ENCODE measurements at regions of chr19 and their contacts with region 1.

Region 1: GRCh38 chr19:39532233-39533002 is at the start of gene EID2B:
- DNase-seq: peak; percentile 96 to 98 (median 97)
- ATAC-seq: peak; percentile 97
- H3K4me3 ChIP-seq: peak within 1 kb of the TSS; percentile 72
- H3K27ac ChIP-seq: peak within 1 kb of the TSS; percentile 59
- H3K4me1 ChIP-seq: peaks cover 3 to 6% of the 10 kb centered on the region in 2 experiments; a peak in 2 of 5 replicates
- H3K27me3 ChIP-seq: no peaks in the 10 kb centered on the region
- CTCF ChIP-seq: peak; percentile 96 to 99 (median 99)
- EP300 ChIP-seq: peak; percentile 24; the same call in 1 of the 2 replicates
- POLR2A ChIP-seq: peak; percentile 68
- RAD21 ChIP-seq: peak; percentile 98
- polyA plus RNA-seq, gene EID2B: 4.9 to 5.4 TPM

Region 2: DNA sequence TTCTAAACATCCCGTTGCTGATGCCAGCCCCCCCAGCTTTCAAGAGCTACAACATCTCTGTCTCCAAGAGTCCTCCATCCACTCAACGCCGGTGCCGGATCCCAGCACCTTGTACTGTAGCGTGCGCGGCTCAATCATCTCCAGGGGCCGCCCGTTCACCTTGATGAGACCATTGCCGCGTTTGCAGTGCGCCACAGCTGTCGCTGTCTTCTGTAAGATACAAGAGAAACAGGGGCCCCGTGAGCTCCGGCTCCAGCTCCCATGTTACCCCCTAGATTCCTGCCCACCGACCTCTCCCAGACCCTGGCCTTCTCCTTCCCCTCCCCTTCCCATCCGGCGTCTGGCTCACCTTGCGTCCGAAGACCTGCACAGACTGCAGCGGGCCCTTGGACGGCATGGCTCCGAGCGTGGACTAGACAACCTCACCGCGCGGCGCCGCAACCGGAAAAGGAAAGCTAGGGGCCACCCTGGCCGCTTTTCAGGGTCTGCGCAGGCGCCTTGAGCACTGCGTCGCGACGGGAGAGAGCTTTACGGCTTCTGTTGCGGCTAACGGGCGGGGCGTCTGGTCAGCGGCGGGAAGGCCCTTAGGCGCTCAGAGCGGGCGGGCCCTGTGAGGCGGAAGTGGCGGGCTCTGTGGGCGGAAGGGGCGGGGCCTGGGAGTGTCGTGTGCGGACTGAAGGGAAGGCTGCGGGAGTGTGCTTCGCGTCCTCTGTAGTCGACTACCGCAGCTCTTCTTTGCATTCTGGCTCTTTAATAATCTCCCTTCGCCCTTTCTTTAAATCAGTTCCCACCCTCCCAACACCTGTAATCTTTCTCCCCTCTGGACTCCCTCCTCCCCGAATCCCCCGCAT is 96.7 kb before region 1 on chr19 and contains the start of gene RPS16:
- CTCF ChIA-PET with region 1: interaction called, 4 read pairs
- POLR2A ChIA-PET with region 1: interaction called, 13 read pairs
- in situ Hi-C with region 1: loop called (anchors 5 kb)
- intact Hi-C with region 1: loop called (anchors 1 kb)
- DNase-seq: peak; percentile 95 to 99 (median 95)
- ATAC-seq: peak; percentile 88
- H3K4me3 ChIP-seq: peak within 1 kb of the TSS; percentile 100
- H3K27ac ChIP-seq: peak within 1 kb of the TSS; percentile 95
- H3K4me1 ChIP-seq: peaks cover 25 to 29% of the 10 kb centered on the region in 2 experiments
- H3K27me3 ChIP-seq: no peaks in the 10 kb centered on the region
- CTCF ChIP-seq: no peak
- EP300 ChIP-seq: no peak
- POLR2A ChIP-seq: peak; percentile 99
- RAD21 ChIP-seq: no peak
- polyA plus RNA-seq, gene RPS16: 2,545 to 3,175 TPM

Region 3: DNA sequence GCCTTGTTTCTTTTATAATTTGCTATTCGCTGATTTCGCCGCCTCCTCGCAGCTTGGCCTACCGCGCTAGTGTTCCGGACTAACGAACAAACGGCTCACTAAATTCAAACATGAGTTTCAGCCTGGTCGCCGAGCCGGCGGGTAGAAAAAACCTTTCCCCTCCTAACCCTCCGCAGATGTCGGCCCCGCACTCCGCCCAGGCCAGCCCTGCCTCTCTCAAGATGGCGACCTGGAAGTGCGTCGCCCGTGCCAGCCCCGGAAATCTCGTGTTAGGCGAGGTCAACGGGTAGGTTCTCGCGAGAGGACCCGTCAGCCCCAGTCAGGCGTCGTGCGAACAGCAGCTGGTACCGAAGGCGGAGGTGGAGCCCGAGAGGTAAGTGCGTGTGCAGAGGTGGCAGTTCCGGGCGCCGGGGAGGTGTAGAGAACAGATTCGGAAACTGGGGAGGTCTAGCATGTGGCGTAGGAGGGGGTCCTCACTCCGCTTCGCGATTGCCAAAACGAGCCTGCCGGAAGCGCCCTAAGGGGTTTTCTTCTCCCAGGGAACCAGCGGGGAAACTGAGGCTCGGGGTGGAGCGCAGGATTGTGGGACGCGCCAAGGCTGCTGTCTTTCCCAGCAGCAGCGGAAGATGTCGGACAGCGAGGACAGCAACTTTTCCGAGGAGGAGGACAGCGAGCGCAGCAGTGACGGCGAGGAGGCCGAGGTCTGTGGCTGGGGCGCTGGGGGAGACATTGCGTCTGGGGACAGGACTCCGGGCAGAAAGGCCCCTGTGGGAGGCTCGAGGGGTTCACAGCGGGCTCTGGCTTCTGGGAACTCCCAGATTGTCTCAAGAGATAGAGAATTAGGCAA is 86.9 kb before region 1 on chr19 and contains the start of gene SUPT5H:
- CTCF ChIA-PET with region 1: interaction called, 4 read pairs
- POLR2A ChIA-PET with region 1: interaction called, 3 read pairs
- in situ Hi-C with region 1: loop called (anchors 5 kb)
- intact Hi-C with region 1: loop called (anchors 1 kb)
- DNase-seq: peak; percentile 95 to 99 (median 96)
- ATAC-seq: peak; percentile 99
- H3K4me3 ChIP-seq: peak within 1 kb of the TSS; percentile 71
- H3K27ac ChIP-seq: peak within 1 kb of the TSS; percentile 72
- H3K4me1 ChIP-seq: peaks cover 2 to 22% of the 10 kb centered on the region in 2 experiments; a peak in 3 of 5 replicates
- H3K27me3 ChIP-seq: no peaks in the 10 kb centered on the region
- CTCF ChIP-seq: peak in 1 of 3 experiments; percentile 28; a peak in 1 of 6 replicates
- EP300 ChIP-seq: peak; percentile 41; the same call in 1 of the 2 replicates
- POLR2A ChIP-seq: peak; percentile 88
- RAD21 ChIP-seq: no peak
- polyA plus RNA-seq, gene SUPT5H: 13.3 to 18.8 TPM

Region 4: DNA sequence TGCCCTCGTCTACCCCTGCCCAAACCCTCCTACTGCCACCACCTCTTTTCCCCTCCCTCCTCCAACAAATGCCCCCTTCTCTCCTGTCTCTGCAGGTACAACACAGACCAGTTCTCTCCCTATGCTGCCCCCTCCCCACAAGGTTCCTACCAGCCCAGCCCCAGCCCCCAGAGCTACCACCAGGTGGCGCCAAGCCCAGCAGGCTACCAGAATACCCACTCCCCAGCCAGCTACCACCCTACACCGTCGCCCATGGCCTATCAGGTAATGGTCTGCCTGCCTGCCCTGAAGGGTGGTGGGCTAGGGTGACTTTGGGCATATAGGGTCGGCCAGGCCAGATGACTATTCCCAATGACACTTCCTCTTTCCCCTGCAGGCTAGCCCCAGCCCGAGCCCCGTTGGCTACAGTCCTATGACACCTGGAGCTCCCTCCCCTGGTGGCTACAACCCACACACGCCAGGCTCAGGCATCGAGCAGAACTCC is 58.2 kb before region 1 on chr19:
- CTCF ChIA-PET with region 1: interaction called, 12 read pairs
- POLR2A ChIA-PET with region 1: interaction called, 3 read pairs
- in situ Hi-C with region 1: no loop called
- intact Hi-C with region 1: loop called (anchors 2 kb)
- DNase-seq: peak; percentile 69 to 74 (median 72)
- ATAC-seq: peak; percentile 93
- H3K4me3 ChIP-seq: no peak overlapping the region
- H3K27ac ChIP-seq: no peak overlapping the region
- H3K4me1 ChIP-seq: peaks cover 4 to 16% of the 10 kb centered on the region in 2 experiments; a peak in 2 of 5 replicates
- H3K27me3 ChIP-seq: no peaks in the 10 kb centered on the region
- CTCF ChIP-seq: peak; percentile 75 to 83 (median 82)
- EP300 ChIP-seq: no peak
- POLR2A ChIP-seq: no peak
- RAD21 ChIP-seq: peak; percentile 34 to 58

Region 5: GRCh38 chr19:39502640-39503417 is 29.6 kb before region 1 on chr19:
- CTCF ChIA-PET with region 1: interaction called, 11 read pairs
- POLR2A ChIA-PET with region 1: interaction called, 4 read pairs
- in situ Hi-C with region 1: no loop called
- intact Hi-C with region 1: loop called (anchors 1 kb)
- DNase-seq: peak; percentile 88 to 91 (median 90)
- ATAC-seq: peak; percentile 68
- H3K4me3 ChIP-seq: peak overlapping the region; percentile 33
- H3K27ac ChIP-seq: peak overlapping the region; percentile 50; the same call in 2 of the 3 replicates
- H3K4me1 ChIP-seq: peaks cover 19 to 47% of the 10 kb centered on the region in 2 experiments
- H3K27me3 ChIP-seq: no peaks in the 10 kb centered on the region
- CTCF ChIP-seq: peak; percentile 69 to 94 (median 82)
- EP300 ChIP-seq: no peak
- POLR2A ChIP-seq: no peak
- RAD21 ChIP-seq: peak; percentile 35 to 64; a peak in 3 of 4 replicates

Region 6: GRCh38 chr19:39546599-39546998 is 14.2 kb after region 1 on chr19:
- CTCF ChIA-PET with region 1: no interaction called
- POLR2A ChIA-PET with region 1: no interaction called
- in situ Hi-C with region 1: no loop called
- intact Hi-C with region 1: no loop called
- DNase-seq: peak in 1 of 4 experiments; percentile 34
- ATAC-seq: peak; percentile 51; the same call in 2 of the 3 replicates
- H3K4me3 ChIP-seq: no peak overlapping the region
- H3K27ac ChIP-seq: no peak overlapping the region
- H3K4me1 ChIP-seq: peaks cover 0 to 3% of the 10 kb centered on the region in 2 experiments; a peak in 2 of 5 replicates
- H3K27me3 ChIP-seq: peaks cover 11 to 16% of the 10 kb centered on the region in 2 experiments; a peak in 3 of 5 replicates
- CTCF ChIP-seq: no peak
- EP300 ChIP-seq: no peak
- POLR2A ChIP-seq: no peak
- RAD21 ChIP-seq: no peak

Region 7: GRCh38 chr19:39679056-39679790 is 146.8 kb after region 1 on chr19:
- CTCF ChIA-PET with region 1: no interaction called
- POLR2A ChIA-PET with region 1: no interaction called
- in situ Hi-C with region 1: no loop called
- intact Hi-C with region 1: no loop called
- DNase-seq: no peak
- ATAC-seq: no peak
- H3K4me3 ChIP-seq: no peak overlapping the region
- H3K27ac ChIP-seq: no peak overlapping the region
- H3K4me1 ChIP-seq: no peaks in the 10 kb centered on the region
- H3K27me3 ChIP-seq: peaks cover 11 to 44% of the 10 kb centered on the region in 2 experiments; a peak in 4 of 5 replicates
- CTCF ChIP-seq: no peak
- EP300 ChIP-seq: no peak
- POLR2A ChIP-seq: no peak
- RAD21 ChIP-seq: no peak

Measured in K562 (cell line).